CD4-positive, alpha-beta memory T cell (primary cell): ENCODE measurements at regions of chr22 and their contacts with region 1.

Region 1: GRCh38 chr22:37267135-37267587 is 15.1 kb upstream of the CYTH4 start:
- DNase-seq: peak; percentile 65 to 76 (median 72)
- H3K4me3 ChIP-seq: peak overlapping the region; percentile 69 to 73
- H3K4me3 Mint-ChIP-seq: peak overlapping the region; percentile 83 to 93 (median 89)
- H3K27ac ChIP-seq: peak overlapping the region; percentile 69
- H3K27ac Mint-ChIP-seq: peak overlapping the region; percentile 83 to 98 (median 95)
- H3K4me1 ChIP-seq: peaks cover 26% of the 10 kb centered on the region
- H3K4me1 Mint-ChIP-seq: peaks cover 22 to 46% (median 32%) of the 10 kb centered on the region in 4 donors
- H3K27me3 ChIP-seq: no peaks in the 10 kb centered on the region
- H3K27me3 Mint-ChIP-seq: no peaks in the 10 kb centered on the region

Region 2: GRCh38 chr22:37154925-37155712 is 112.0 kb before region 1 on chr22:
- CTCF ChIA-PET with region 1: no interaction called
- POLR2A ChIA-PET with region 1: no interaction called
- intact Hi-C with region 1: no loop called
- DNase-seq: no peak
- H3K4me3 ChIP-seq: no peak overlapping the region
- H3K4me3 Mint-ChIP-seq: peak overlapping the region in 1 of 8 donors; percentile 4
- H3K27ac ChIP-seq: no peak overlapping the region
- H3K27ac Mint-ChIP-seq: peak overlapping the region in 3 of 7 donors; percentile 3 to 50 (median 31)
- H3K4me1 ChIP-seq: peaks cover 9% of the 10 kb centered on the region
- H3K4me1 Mint-ChIP-seq: peaks cover 12 to 44% (median 32%) of the 10 kb centered on the region in 4 donors
- H3K27me3 ChIP-seq: no peaks in the 10 kb centered on the region
- H3K27me3 Mint-ChIP-seq: peaks cover 0 to 1% of the 10 kb centered on the region in 2 donors

Region 3: GRCh38 chr22:37282385-37282677 is 15.2 kb after region 1 on chr22 and contains the start of gene CYTH4:
- CTCF ChIA-PET with region 1: interaction called, 24 read pairs
- POLR2A ChIA-PET with region 1: interaction called, 23 read pairs
- intact Hi-C with region 1: loop called (anchors 1 kb)
- DNase-seq: peak; percentile 52 to 87 (median 65)
- H3K4me3 ChIP-seq: peak within 1 kb of the TSS; percentile 98 to 99
- H3K4me3 Mint-ChIP-seq: peak within 1 kb of the TSS; percentile 89 to 100 (median 94)
- H3K27ac ChIP-seq: peak within 1 kb of the TSS; percentile 81
- H3K27ac Mint-ChIP-seq: peak within 1 kb of the TSS; percentile 83 to 99 (median 96)
- H3K4me1 ChIP-seq: peaks cover 46% of the 10 kb centered on the region
- H3K4me1 Mint-ChIP-seq: peaks cover 33 to 56% (median 44%) of the 10 kb centered on the region in 4 donors
- H3K27me3 ChIP-seq: no peaks in the 10 kb centered on the region
- H3K27me3 Mint-ChIP-seq: no peaks in the 10 kb centered on the region
- total RNA-seq, gene CYTH4: 169 to 177 TPM

Region 4: DNA sequence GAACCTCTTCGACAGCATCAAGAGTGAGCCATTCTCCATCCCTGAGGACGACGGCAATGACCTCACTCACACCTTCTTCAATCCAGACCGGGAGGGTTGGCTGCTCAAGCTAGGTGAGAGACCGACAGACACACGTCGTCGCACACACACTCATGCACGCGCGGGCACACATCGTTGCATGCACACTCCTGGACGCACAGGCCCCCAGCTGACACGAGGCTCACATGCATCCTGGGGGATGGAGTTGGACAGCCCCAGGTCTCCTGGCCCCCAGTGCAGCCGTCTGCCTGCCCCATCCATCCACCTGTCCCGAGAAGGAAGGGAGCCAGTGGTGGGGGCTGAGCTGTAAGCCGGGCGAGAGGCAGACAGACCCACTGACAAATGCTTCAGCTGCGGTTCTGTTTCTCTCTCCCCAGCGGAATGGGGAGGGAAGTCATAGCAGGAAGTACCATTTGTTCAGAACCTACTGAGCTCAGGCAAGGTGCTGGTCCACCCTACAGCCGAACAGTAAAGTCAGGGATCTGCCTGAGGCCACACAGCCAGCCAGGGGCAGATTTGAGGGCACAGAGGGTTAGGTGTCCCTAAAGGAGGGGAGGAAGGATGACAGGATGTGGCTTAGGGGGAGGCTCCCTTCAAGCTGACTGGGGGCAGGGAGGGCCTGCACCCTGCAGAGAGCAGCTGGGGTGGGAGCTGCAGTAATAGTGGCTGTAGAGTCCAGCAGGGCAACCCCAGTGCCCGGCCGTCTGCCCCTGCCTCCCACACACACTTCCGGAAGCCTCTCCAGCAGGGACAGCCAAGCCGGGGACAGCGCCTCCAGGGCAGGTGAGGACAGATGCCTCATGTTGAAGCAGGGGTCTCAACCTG is 42.3 kb after region 1 on chr22:
- CTCF ChIA-PET with region 1: interaction called, 42 read pairs
- POLR2A ChIA-PET with region 1: interaction called, 111 read pairs
- intact Hi-C with region 1: loop called (anchors 1 kb)
- DNase-seq: peak; percentile 61 to 72 (median 67)
- H3K4me3 ChIP-seq: peak overlapping the region; percentile 49 to 54
- H3K4me3 Mint-ChIP-seq: peak overlapping the region; percentile 79 to 90 (median 82)
- H3K27ac ChIP-seq: peak overlapping the region; percentile 59
- H3K27ac Mint-ChIP-seq: peak overlapping the region; percentile 70 to 100 (median 92)
- H3K4me1 ChIP-seq: peaks cover 78% of the 10 kb centered on the region
- H3K4me1 Mint-ChIP-seq: peaks cover 56 to 94% (median 70%) of the 10 kb centered on the region in 4 donors
- H3K27me3 ChIP-seq: no peaks in the 10 kb centered on the region
- H3K27me3 Mint-ChIP-seq: no peaks in the 10 kb centered on the region

Region 5: DNA sequence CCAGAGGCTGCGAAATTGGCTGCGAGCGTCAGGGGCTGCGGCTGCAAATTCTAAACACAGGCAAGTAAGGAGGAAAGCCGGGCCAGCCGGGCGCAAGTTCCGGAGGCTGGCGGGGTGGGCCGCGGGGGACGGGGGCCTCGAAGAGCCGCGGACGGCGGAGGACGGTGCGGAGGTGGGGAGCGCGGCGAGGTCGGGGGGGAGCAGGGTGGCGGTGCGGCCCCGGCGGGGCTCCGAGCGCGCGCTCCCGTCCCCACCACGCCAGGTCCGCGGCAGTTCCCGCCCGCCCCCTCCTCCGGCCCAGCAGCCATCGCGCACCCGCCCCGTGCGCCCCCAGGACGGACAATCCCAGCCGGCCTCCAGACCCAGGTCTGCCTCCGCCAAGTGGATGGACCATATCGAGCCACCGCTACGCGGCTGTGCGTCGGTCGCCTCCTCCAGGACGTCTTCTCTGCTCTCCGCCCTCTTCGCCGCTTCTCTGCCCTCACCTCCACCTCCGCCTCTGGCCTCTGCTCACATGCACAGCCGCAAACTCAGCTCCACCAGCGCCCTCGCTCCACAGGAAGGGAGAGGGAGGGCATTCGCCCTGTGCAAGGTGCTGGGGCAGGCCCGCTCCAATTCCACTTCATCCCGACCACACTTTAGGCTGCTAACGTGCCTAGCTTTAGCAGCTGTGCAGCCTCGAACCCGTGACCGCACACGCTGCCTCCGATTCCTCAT is 153.0 kb after region 1 on chr22:
- CTCF ChIA-PET with region 1: interaction called, 3 read pairs
- POLR2A ChIA-PET with region 1: no interaction called
- intact Hi-C with region 1: loop called (anchors 2 kb)
- DNase-seq: peak in 1 of 5 donors; percentile 21
- H3K4me3 ChIP-seq: peak overlapping the region in 1 of 2 donors; percentile 19
- H3K4me3 Mint-ChIP-seq: peak overlapping the region; percentile 70 to 94 (median 84)
- H3K27ac ChIP-seq: no peak overlapping the region
- H3K27ac Mint-ChIP-seq: no peak overlapping the region
- H3K4me1 ChIP-seq: peaks cover 15% of the 10 kb centered on the region
- H3K4me1 Mint-ChIP-seq: peaks cover 21 to 39% (median 27%) of the 10 kb centered on the region in 4 donors
- H3K27me3 ChIP-seq: peaks cover 4% of the 10 kb centered on the region
- H3K27me3 Mint-ChIP-seq: peaks cover 25 to 36% of the 10 kb centered on the region in 2 donors

Region 6: GRCh38 chr22:37457093-37457893 is 190.1 kb after region 1 on chr22:
- CTCF ChIA-PET with region 1: interaction called, 27 read pairs
- POLR2A ChIA-PET with region 1: no interaction called
- intact Hi-C with region 1: no loop called
- DNase-seq: peak; percentile 74 to 80 (median 77)
- H3K4me3 ChIP-seq: no peak overlapping the region
- H3K4me3 Mint-ChIP-seq: no peak overlapping the region
- H3K27ac ChIP-seq: no peak overlapping the region
- H3K27ac Mint-ChIP-seq: peak overlapping the region in 6 of 7 donors; percentile 15 to 57 (median 22)
- H3K4me1 ChIP-seq: peaks cover 3% of the 10 kb centered on the region
- H3K4me1 Mint-ChIP-seq: peaks cover 0 to 7% (median 5%) of the 10 kb centered on the region in 4 donors
- H3K27me3 ChIP-seq: no peaks in the 10 kb centered on the region
- H3K27me3 Mint-ChIP-seq: no peaks in the 10 kb centered on the region